Head of caudate nucleus (tissue), 42 donors: ENCODE measurements at regions of chr2 and their contacts with region 1.

Region 1: GRCh38 chr2:159118115-159118858 is 149.8 kb downstream of the TANC1 start:
- DNase-seq: peak; percentile 63 to 98 (median 94)

Region 2: GRCh38 chr2:158903711-158904443 is 214.4 kb before region 1 on chr2:
- intact Hi-C with region 1: loop called (anchors 1 kb)
- DNase-seq: no peak

Region 3: DNA sequence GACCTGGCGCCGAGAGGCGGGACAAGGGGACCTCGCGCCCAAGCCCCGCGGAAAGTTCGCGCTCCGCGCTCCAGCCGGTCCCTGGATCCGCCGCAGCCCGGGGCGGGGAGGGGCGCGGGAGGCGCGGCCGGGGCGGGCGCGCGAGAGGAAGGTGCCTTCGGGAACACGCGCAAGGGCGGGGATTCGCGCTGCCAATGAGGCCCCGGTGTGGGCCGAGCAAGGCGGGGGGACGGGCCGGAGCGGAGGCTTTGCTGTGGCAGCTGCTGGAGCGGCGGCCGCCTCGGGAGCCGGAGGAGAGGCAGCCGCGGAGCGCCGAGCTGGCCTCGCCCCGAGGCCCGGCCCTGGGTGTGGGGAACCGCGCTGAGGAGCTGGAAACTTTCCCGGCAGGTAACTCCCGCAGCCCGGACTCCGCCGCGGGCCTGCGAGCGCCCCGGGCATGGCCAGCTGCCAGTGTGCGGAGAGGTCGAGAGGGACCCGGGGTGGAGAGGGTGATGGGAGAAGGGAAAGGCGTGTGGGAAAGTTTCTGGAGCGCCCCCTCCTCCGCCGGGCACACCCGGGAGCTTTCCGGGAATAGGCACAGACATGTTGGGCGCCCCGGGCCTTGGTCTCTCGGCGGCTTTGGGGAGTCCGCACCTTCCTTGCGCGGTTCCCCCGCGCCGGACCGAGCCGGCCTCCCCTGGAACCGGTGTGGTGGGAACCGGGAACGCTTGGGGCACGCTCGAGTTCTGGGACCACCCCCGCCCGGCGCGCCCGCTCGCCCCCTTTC is 149.7 kb before region 1 on chr2 and contains the start of gene TANC1:
- intact Hi-C with region 1: loop called (anchors 5 kb)
- DNase-seq: peak; percentile 82 to 98 (median 95)

Region 4: DNA sequence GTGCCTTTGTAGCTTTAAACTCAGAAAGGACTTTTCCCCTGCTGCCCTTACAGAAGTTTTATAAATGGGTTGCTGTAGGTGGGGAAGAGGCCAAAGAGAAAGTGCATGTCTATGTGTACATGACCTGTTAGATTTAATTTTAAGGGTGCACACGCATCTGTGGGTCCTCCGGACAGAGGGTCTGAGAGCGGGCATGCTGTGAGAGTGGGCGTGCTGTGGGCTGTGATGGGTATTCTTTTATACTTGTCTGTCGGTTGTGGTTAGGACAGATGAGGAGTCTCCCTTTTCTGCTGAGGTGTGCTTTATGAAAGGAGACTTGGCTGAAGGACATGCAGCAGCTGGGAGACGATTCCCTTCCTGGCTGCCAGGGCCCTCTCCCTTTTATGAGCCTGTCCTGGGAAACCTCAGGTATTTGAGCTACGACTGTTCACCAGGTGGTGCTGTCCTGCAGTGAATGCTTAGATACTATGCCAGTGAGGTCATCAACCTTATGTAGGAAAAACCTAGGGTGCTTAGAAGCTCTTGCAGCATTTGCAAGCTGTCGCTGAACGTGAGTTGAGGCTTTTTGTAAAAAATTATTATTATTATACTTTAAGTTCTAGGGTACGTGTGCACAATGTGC is 82.4 kb before region 1 on chr2:
- intact Hi-C with region 1: loop called (anchors 10 kb)
- DNase-seq: no peak